MCF 10A (cell line): ENCODE measurements at regions of chr5 and their contacts with region 1.

Region 1: DNA sequence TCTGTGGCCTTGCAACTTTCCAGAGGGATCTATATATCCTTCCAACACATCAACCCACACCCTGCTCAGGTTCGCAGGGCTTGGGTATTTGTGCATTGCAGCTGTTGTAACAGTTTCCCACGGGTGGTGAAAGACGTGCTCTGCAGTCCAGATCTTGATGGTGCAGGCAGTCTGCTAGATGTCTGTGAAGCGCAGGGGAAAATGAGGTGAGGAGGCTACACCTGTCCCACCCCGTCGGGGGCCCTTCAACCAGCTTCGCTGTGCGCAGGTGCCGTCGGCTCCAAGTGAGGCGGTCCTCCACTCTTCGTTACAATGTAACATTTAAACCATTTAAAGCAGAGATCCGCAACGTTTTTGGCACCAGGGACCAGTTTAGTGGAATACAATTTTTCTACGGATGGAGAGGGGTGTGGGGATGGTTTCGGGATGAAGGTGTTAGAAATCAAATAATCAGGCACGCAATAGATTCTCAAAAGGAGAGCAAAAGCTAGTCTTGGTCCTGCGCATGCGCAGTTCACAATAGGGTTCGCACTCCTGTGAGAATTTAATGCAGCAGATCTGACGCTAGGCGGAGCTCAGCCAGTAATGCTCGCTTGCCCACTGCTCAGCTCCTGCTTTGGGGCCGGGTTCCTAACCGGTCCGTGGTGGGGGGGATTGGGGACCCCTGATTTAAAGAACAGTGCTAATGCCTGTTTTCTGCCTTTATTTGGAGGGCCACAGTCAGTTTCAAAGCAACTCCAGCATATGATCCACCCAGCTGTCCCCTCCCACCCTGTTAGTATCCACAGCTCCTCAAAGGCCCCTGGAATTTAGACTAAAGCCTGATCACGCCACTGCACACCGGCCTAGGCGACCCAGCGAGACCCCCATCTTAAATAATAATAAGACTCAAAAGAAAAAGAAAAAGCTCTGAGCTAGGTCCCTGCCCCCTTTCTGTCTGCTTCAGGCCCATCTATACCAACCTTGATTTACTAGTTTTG is 97.1 kb upstream of the SELENOP start:
- DNase-seq: peak; percentile 92
- H3K4me3 Mint-ChIP-seq: peak overlapping the region; percentile 80
- H3K27ac Mint-ChIP-seq: no peak overlapping the region
- H3K4me1 Mint-ChIP-seq: peaks cover 4% of the 10 kb centered on the region
- H3K27me3 Mint-ChIP-seq: no peaks in the 10 kb centered on the region
- CTCF ChIP-seq: peak; percentile 82

Region 2: GRCh38 chr5:42745426-42745825 is 163.4 kb before region 1 on chr5:
- CTCF ChIA-PET with region 1: no interaction called
- POLR2A ChIA-PET with region 1: no interaction called
- intact Hi-C with region 1: no loop called
- DNase-seq: peak; percentile 22
- H3K4me3 Mint-ChIP-seq: no peak overlapping the region
- H3K27ac Mint-ChIP-seq: no peak overlapping the region
- H3K4me1 Mint-ChIP-seq: peaks cover 5% of the 10 kb centered on the region
- H3K27me3 Mint-ChIP-seq: no peaks in the 10 kb centered on the region
- CTCF ChIP-seq: peak; percentile 34

Region 3: DNA sequence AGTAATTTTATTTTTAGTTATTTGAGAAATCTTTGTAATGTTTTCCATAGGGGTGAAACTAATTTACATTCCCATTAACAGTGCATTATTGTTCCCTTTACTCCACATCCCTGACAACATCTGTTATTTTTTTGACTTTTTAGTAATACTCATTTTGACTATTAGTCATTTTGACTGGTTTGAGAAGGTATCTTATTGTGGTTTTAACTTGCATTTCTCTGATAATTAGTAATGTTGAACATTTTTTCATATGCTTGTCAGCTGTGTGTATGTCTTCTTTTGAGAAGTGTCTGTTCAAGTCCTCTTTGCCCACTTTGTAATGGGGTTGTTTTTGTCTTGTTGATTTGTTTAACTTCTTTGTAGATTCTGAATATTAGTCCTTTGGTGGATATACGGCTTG is 124.7 kb before region 1 on chr5:
- CTCF ChIA-PET with region 1: no interaction called
- POLR2A ChIA-PET with region 1: no interaction called
- intact Hi-C with region 1: no loop called
- DNase-seq: no peak
- H3K4me3 Mint-ChIP-seq: no peak overlapping the region
- H3K27ac Mint-ChIP-seq: no peak overlapping the region
- H3K4me1 Mint-ChIP-seq: peaks cover 5% of the 10 kb centered on the region
- H3K27me3 Mint-ChIP-seq: no peaks in the 10 kb centered on the region
- CTCF ChIP-seq: no peak

Region 4: DNA sequence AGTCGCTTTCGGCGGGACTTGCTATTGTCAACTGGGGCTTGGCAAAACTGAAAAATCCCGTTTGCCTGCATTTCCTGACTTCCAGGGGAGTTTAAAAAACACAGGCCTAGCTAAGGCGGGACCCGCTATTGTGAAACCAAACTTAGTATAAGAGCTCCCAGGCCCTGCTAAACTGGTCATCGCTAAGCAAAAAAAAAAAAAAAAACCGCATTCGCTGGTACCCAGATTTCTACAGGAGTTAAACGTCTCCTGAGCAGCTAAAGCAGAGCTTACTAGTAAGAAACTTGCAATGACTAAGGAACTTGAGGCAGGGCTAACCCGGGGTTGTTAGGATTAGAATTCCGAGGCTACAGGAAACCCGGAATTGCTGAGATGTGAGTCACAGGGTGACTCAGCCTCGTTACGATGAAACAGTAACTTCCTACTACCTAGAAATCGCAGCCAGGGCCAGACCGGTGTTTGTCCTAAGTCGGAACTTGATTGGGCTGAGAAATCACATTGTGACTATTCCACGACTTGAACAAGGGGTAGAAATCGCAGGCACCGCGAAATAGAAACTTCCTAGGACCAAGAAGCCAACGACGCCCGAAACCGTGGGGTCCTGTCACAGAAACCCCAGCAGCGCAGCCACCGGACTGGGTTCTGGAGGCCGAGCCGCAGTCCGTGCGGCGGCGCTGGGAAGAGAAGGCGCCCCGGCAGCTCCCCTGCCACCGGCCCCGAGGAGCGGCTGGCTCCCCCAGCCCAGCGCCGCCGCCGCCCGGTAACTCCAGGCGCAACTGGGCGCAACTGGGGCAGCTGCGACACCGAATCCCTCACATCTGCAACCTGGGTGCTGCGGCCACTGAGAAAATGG is 41.9 kb after region 1 on chr5:
- CTCF ChIA-PET with region 1: interaction called, 10 read pairs
- POLR2A ChIA-PET with region 1: no interaction called
- intact Hi-C with region 1: no loop called
- DNase-seq: peak; percentile 98
- H3K4me3 Mint-ChIP-seq: peak overlapping the region; percentile 47
- H3K27ac Mint-ChIP-seq: peak overlapping the region; percentile 85
- H3K4me1 Mint-ChIP-seq: no peaks in the 10 kb centered on the region
- H3K27me3 Mint-ChIP-seq: no peaks in the 10 kb centered on the region
- CTCF ChIP-seq: no peak

Region 5: DNA sequence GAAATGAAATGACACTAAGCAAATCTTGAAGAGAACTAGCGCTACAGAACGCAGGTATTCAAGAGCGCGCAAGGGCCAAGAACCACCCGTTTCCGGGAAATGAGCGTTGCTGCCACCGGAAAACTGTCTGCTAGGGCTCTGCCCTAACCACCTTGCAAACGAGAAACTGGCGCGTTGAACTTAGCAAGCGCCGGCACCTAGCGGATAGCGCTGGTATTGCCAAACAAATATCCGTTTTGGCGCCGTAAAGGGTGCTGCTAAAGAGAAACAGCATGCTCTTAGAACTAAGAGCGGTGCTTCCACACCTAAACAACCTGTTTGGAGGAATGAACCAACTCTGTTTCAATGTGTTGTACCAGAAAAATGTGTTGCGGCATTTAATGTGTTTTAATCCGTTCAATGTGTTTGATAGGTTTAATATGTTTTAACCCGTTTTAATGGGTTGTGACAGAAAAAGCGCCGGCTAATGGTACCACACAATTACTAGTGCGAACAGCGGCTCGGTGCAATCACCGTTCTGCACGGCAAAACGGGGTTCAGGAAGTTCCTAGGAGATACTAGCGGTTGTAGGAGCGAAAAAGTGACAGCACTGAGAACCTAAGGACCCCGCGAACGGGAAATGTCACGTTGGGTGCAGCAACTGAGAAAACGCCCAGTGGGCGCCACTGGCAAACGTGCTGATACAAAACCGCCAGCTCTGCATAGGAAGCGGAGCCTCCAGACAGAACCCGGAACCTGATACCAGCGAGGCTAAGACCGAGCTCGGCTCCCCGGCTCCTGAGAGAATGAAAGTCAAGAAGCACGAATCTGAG is 131.7 kb after region 1 on chr5 and contains the start of gene ANXA2R:
- CTCF ChIA-PET with region 1: interaction called, 49 read pairs
- POLR2A ChIA-PET with region 1: interaction called, 53 read pairs
- intact Hi-C with region 1: loop called (anchors 2 kb)
- DNase-seq: no peak
- H3K4me3 Mint-ChIP-seq: peak within 1 kb of the TSS; percentile 88
- H3K27ac Mint-ChIP-seq: peak within 1 kb of the TSS; percentile 95
- H3K4me1 Mint-ChIP-seq: no peaks in the 10 kb centered on the region
- H3K27me3 Mint-ChIP-seq: no peaks in the 10 kb centered on the region
- CTCF ChIP-seq: no peak
- total RNA-seq, gene ANXA2R: 0.98 and 1.3 TPM in 2 replicates

Region 6: GRCh38 chr5:43061352-43062075 is 152.7 kb after region 1 on chr5:
- CTCF ChIA-PET with region 1: interaction called, 15 read pairs
- POLR2A ChIA-PET with region 1: interaction called, 90 read pairs
- intact Hi-C with region 1: loop called (anchors 1 kb)
- DNase-seq: no peak
- H3K4me3 Mint-ChIP-seq: no peak overlapping the region
- H3K27ac Mint-ChIP-seq: peak overlapping the region; percentile 21
- H3K4me1 Mint-ChIP-seq: peaks cover 9% of the 10 kb centered on the region
- H3K27me3 Mint-ChIP-seq: no peaks in the 10 kb centered on the region
- CTCF ChIP-seq: no peak

Region 7: DNA sequence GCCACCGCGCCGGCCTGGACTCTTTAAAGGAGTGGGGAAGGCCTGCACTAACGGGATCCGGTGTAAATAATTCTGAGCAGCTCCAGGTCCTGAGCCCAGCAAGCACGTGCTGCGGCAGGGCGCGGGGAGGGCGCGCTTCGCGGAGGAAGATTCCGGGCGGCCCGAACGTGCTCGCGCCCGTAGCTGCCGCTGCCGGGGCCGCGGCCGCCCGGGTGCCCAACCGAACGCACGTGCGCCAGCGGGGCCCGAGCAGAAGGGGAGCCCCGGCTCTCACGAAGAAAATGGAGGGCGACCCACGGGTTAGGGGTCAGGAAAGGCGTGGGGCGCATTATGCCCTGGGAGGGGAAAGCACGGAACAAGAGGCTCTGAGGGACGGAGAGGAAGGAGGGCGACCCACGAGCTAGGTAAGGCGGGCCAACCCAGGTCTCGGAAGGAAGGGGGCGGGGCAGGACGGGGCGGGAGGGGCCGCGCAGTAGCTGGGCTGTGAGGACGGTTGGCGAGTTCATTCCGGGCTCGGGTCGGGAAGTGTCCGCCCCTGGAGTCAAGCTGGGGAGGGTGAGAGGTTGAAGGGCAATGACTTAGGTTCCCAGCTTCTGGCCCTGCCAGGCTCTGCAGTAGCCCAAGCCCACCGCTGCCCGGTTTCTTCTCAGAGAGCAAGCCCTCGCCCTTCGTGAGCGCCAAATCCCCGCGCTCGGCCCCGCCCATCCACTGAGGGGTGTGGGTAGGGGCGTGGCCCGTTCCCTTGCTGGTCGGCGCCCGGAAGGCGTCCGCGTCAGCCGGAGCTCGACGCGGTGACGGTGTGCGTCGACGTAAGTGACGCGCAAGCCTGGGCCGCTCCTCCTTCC is 212.1 kb after region 1 on chr5 and contains the start of gene ZNF131:
- CTCF ChIA-PET with region 1: interaction called, 28 read pairs
- POLR2A ChIA-PET with region 1: interaction called, 13 read pairs
- intact Hi-C with region 1: no loop called
- DNase-seq: peak; percentile 96
- H3K4me3 Mint-ChIP-seq: peak within 1 kb of the TSS; percentile 92
- H3K27ac Mint-ChIP-seq: peak within 1 kb of the TSS; percentile 90
- H3K4me1 Mint-ChIP-seq: peaks cover 5% of the 10 kb centered on the region
- H3K27me3 Mint-ChIP-seq: no peaks in the 10 kb centered on the region
- CTCF ChIP-seq: no peak
- total RNA-seq, gene ZNF131: 41.3 and 42.4 TPM in 2 replicates

Region 8: GRCh38 chr5:43305948-43306565 is 397.3 kb after region 1 on chr5:
- CTCF ChIA-PET with region 1: interaction called, 5 read pairs
- POLR2A ChIA-PET with region 1: no interaction called
- intact Hi-C with region 1: loop called (anchors 2 kb)
- DNase-seq: peak; percentile 68
- H3K4me3 Mint-ChIP-seq: no peak overlapping the region
- H3K27ac Mint-ChIP-seq: peak overlapping the region; percentile 54
- H3K4me1 Mint-ChIP-seq: peaks cover 50% of the 10 kb centered on the region
- H3K27me3 Mint-ChIP-seq: no peaks in the 10 kb centered on the region
- CTCF ChIP-seq: peak; percentile 69